Activated naive CD4-positive, alpha-beta T cell treated with anti-CD3 and anti-CD28 coated beads for 36 hours (primary cell): ENCODE measurements at regions of chr1 and their contacts with region 1.

Region 1: GRCh38 chr1:36385410-36386257 is at the start of gene STK40:
- DNase-seq: peak; percentile 99
- H3K4me3 Mint-ChIP-seq: peak within 1 kb of the TSS; percentile 92
- H3K27ac Mint-ChIP-seq: peak within 1 kb of the TSS; percentile 99
- H3K4me1 Mint-ChIP-seq: peaks cover 55% of the 10 kb centered on the region
- H3K27me3 Mint-ChIP-seq: no peaks in the 10 kb centered on the region
- total RNA-seq, gene STK40: 39.6 to 40.6 TPM

Region 2: DNA sequence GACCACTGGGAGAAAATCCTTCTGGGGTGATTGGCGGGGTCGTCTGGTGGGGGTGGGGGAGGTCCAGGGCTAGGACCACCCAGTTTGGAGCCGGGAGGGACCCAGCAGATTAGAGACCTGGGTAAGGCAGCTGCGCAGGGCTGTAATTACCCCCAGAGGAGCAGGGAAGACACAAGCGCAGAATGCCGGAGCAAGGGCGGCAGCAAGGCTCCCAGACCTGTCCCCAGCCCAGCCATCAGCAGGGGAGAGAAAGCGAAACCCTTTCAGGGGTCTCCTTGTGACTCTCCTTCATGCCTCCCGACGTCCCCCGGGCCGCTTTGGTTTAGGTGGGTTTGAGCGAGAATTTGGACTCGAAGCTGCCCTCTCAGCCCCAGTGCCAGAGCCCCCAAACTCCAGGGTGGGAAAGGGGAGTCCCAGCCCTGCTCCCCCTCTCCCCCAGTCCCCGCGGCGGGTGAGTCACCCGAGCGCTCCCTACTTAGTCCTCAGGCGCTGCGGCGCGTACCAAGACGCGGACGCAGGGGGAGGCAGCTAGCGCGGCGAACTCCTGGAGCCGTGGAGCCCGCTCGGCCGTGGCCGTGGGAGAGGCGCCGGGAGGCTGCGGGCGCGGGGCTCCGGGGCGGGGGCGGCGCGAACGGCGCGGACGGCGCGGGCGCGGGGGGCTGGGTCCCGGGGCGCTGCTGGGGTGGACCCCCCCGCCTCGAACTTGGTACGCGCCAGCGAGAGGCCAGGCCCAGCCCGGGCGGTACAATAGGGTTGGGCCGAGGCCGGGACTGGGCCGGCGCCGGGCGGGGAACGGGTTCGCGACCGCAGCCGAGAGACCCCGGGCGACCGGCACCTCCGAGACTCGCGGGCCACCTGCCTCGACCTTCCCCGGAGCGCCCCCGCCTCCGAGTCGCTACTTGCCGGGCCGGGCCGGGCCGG is 230.0 kb before region 1 on chr1 and contains the start of gene MAP7D1:
- CTCF ChIA-PET with region 1: no interaction called
- intact Hi-C with region 1: loop called (anchors 1 kb)
- DNase-seq: peak; percentile 88
- H3K4me3 Mint-ChIP-seq: peak within 1 kb of the TSS; percentile 90
- H3K27ac Mint-ChIP-seq: peak within 1 kb of the TSS; percentile 94
- H3K4me1 Mint-ChIP-seq: peaks cover 66% of the 10 kb centered on the region
- H3K27me3 Mint-ChIP-seq: no peaks in the 10 kb centered on the region
- total RNA-seq, gene MAP7D1: 106 TPM

Region 3: GRCh38 chr1:36269408-36269838 is 116.2 kb before region 1 on chr1:
- CTCF ChIA-PET with region 1: no interaction called
- intact Hi-C with region 1: no loop called
- DNase-seq: no peak
- H3K4me3 Mint-ChIP-seq: no peak overlapping the region
- H3K27ac Mint-ChIP-seq: peak overlapping the region; percentile 39
- H3K4me1 Mint-ChIP-seq: peaks cover 16% of the 10 kb centered on the region
- H3K27me3 Mint-ChIP-seq: no peaks in the 10 kb centered on the region

Region 4: DNA sequence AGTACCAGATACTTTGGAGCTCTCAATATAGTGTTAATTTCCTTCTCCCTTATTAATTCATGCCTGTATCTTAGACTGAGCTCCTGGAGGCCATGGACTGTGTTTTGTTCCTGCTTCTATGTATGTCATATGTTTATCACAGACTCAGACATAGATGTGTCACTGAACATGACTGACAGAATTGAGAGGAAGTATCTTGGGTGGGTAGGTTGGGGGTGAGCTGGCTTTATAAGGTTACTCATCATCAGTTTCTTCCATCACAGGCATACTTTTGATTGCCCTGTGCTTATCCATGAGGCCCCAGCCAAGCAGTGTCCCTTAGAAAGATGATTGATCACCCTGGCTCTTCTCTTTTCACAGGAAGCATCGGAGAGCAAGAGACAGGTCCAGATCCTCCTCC is 85.1 kb before region 1 on chr1:
- CTCF ChIA-PET with region 1: interaction called, 6 read pairs
- intact Hi-C with region 1: loop called (anchors 1 kb)
- DNase-seq: peak; percentile 39
- H3K4me3 Mint-ChIP-seq: no peak overlapping the region
- H3K27ac Mint-ChIP-seq: peak overlapping the region; percentile 77
- H3K4me1 Mint-ChIP-seq: peaks cover 64% of the 10 kb centered on the region
- H3K27me3 Mint-ChIP-seq: no peaks in the 10 kb centered on the region

Region 5: GRCh38 chr1:36350659-36351226 is 34.9 kb before region 1 on chr1:
- CTCF ChIA-PET with region 1: interaction called, 4 read pairs
- intact Hi-C with region 1: loop called (anchors 1 kb)
- DNase-seq: peak; percentile 74
- H3K4me3 Mint-ChIP-seq: no peak overlapping the region
- H3K27ac Mint-ChIP-seq: peak overlapping the region; percentile 75
- H3K4me1 Mint-ChIP-seq: peaks cover 30% of the 10 kb centered on the region
- H3K27me3 Mint-ChIP-seq: no peaks in the 10 kb centered on the region

Region 6: DNA sequence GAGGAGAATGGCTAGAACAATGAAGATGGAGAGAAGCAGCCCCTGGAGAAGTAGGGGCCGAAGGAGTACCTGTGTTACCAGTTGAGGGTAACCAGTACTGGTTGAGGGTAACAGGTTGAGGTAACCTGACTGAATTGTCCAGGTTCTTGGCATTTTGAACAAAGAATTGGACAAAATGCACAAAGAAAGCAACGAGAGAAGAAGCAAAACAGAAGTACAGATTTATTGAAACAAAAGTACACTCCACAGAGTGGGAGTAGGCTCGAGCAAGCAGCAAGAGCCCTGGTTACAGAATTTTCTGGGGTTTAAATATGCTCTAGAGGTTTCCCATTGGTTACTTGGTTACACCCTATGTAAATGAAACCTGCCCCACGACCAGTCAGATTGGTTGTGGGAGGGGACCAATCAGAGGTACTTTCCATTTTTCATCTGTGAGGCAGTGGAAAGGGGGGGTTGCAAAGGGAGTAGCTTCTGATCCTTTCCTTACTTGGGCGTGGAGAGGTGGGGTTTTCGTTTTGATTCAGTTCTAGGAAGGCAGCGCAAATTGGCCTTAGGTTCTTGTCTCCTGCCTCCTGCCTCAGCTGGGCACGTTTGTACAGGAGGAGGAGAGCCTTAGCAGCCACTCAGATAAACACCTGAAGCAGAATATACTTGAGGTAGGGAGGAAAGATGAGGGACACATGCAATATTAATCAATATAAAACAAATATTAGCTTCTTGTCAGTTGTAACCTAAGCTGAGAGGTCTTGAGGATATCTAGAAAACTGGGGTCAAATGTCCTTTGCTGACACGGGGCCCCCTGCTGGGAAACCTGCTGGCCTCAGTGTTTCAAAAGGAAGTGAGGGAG is 26.3 kb after region 1 on chr1:
- CTCF ChIA-PET with region 1: interaction called, 6 read pairs
- intact Hi-C with region 1: loop called (anchors 1 kb)
- DNase-seq: peak; percentile 83
- H3K4me3 Mint-ChIP-seq: no peak overlapping the region
- H3K27ac Mint-ChIP-seq: peak overlapping the region; percentile 85
- H3K4me1 Mint-ChIP-seq: peaks cover 16% of the 10 kb centered on the region
- H3K27me3 Mint-ChIP-seq: no peaks in the 10 kb centered on the region

Region 7: DNA sequence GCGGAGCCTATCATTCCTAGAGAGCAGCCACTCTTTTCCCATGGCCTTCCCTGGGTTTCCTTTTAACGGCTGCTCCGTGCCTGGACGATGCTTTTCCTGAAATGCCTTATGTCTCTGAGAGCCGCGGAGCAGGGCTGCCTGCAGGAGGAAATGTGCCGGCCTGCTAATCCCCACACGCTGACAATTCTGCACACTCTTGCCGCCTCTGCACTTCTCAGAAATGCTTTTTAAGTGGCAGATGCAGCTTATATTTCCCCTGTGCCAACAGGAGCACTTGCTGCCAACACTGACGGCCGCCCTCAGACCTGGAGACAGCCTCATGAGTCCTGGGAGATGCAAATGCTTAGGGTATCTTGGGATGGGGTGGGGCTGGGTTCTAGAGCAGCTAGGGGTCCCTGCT is 395.5 kb after region 1 on chr1:
- CTCF ChIA-PET with region 1: no interaction called
- intact Hi-C with region 1: no loop called
- DNase-seq: no peak
- H3K4me3 Mint-ChIP-seq: no peak overlapping the region
- H3K27ac Mint-ChIP-seq: no peak overlapping the region
- H3K4me1 Mint-ChIP-seq: no peaks in the 10 kb centered on the region
- H3K27me3 Mint-ChIP-seq: peaks cover 5% of the 10 kb centered on the region

Region 8: GRCh38 chr1:37479255-37480124 is 1093.9 kb after region 1 on chr1:
- CTCF ChIA-PET with region 1: no interaction called
- intact Hi-C with region 1: loop called (anchors 1 kb)
- DNase-seq: peak; percentile 97
- H3K4me3 Mint-ChIP-seq: peak overlapping the region; percentile 87
- H3K27ac Mint-ChIP-seq: peak overlapping the region; percentile 99
- H3K4me1 Mint-ChIP-seq: peaks cover 35% of the 10 kb centered on the region
- H3K27me3 Mint-ChIP-seq: no peaks in the 10 kb centered on the region